CD8-positive, alpha-beta T cell (primary cell): ENCODE measurements at regions of chr22 and their contacts with region 1.

Region 1: GRCh38 chr22:35622191-35622913 is 5.2 kb upstream of the MB start:
- DNase-seq: no peak
- ATAC-seq: no peak
- H3K4me3 ChIP-seq: no peak overlapping the region
- H3K4me3 Mint-ChIP-seq: no peak overlapping the region
- H3K27ac ChIP-seq: no peak overlapping the region
- H3K27ac Mint-ChIP-seq: no peak overlapping the region
- H3K4me1 ChIP-seq: peaks cover 2% of the 10 kb centered on the region
- H3K4me1 Mint-ChIP-seq: peaks cover 9% of the 10 kb centered on the region
- H3K27me3 ChIP-seq: no peaks in the 10 kb centered on the region
- H3K27me3 Mint-ChIP-seq: peaks cover 7% of the 10 kb centered on the region
- CTCF ChIP-seq: no peak

Region 2: DNA sequence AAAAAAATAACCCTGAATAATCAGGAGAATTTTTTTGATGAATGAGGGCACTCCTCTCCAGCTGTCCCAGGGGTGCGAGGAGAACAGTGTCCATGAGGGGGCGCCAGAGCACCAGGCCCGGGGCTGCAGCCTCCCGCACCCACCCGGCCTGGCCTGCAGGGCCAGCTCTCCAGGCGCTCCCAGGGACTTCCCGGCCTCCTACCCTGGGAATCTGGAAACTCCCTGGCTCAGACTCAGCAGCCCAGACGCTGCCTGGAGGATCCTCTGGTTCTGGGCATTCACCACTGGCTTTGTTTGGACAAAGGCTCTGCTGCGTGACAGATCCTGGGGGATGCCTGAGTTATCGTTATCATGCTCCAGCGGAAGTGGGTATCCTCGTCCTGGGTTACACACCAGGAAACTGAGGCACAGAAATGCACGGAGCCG is 191.4 kb before region 1 on chr22:
- CTCF ChIA-PET with region 1: no interaction called
- POLR2A ChIA-PET with region 1: no interaction called
- intact Hi-C with region 1: loop called in 1 of 2 experiments (anchors 2 kb)
- DNase-seq: peak; percentile 49 to 76 (median 66)
- ATAC-seq: peak; percentile 84
- H3K4me3 ChIP-seq: no peak overlapping the region
- H3K4me3 Mint-ChIP-seq: no peak overlapping the region
- H3K27ac ChIP-seq: no peak overlapping the region
- H3K27ac Mint-ChIP-seq: no peak overlapping the region
- H3K4me1 ChIP-seq: no peaks in the 10 kb centered on the region
- H3K4me1 Mint-ChIP-seq: peaks cover 2% of the 10 kb centered on the region
- H3K27me3 ChIP-seq: no peaks in the 10 kb centered on the region
- H3K27me3 Mint-ChIP-seq: no peaks in the 10 kb centered on the region
- CTCF ChIP-seq: peak; percentile 83

Region 3: GRCh38 chr22:35575116-35575748 is 47.1 kb before region 1 on chr22:
- CTCF ChIA-PET with region 1: no interaction called
- POLR2A ChIA-PET with region 1: no interaction called
- intact Hi-C with region 1: no loop called
- DNase-seq: peak in 1 of 9 experiments; percentile 31
- ATAC-seq: peak; percentile 49
- H3K4me3 ChIP-seq: no peak overlapping the region
- H3K4me3 Mint-ChIP-seq: no peak overlapping the region
- H3K27ac ChIP-seq: no peak overlapping the region
- H3K27ac Mint-ChIP-seq: no peak overlapping the region
- H3K4me1 ChIP-seq: no peaks in the 10 kb centered on the region
- H3K4me1 Mint-ChIP-seq: no peaks in the 10 kb centered on the region
- H3K27me3 ChIP-seq: no peaks in the 10 kb centered on the region
- H3K27me3 Mint-ChIP-seq: peaks cover 8% of the 10 kb centered on the region
- CTCF ChIP-seq: no peak